Activated CD4-positive, alpha-beta memory T cell treated with anti-CD3 and anti-CD28 coated beads for 36 hours (primary cell): ENCODE measurements at regions of chr22 and their contacts with region 1.

Region 1: GRCh38 chr22:37633625-37634416 is 5.6 kb upstream of the SH3BP1 start:
- DNase-seq: peak; percentile 85
- H3K4me3 Mint-ChIP-seq: peak overlapping the region; percentile 66
- H3K27ac Mint-ChIP-seq: peak overlapping the region; percentile 95
- H3K4me1 Mint-ChIP-seq: peaks cover 65% of the 10 kb centered on the region
- H3K27me3 Mint-ChIP-seq: no peaks in the 10 kb centered on the region

Region 2: DNA sequence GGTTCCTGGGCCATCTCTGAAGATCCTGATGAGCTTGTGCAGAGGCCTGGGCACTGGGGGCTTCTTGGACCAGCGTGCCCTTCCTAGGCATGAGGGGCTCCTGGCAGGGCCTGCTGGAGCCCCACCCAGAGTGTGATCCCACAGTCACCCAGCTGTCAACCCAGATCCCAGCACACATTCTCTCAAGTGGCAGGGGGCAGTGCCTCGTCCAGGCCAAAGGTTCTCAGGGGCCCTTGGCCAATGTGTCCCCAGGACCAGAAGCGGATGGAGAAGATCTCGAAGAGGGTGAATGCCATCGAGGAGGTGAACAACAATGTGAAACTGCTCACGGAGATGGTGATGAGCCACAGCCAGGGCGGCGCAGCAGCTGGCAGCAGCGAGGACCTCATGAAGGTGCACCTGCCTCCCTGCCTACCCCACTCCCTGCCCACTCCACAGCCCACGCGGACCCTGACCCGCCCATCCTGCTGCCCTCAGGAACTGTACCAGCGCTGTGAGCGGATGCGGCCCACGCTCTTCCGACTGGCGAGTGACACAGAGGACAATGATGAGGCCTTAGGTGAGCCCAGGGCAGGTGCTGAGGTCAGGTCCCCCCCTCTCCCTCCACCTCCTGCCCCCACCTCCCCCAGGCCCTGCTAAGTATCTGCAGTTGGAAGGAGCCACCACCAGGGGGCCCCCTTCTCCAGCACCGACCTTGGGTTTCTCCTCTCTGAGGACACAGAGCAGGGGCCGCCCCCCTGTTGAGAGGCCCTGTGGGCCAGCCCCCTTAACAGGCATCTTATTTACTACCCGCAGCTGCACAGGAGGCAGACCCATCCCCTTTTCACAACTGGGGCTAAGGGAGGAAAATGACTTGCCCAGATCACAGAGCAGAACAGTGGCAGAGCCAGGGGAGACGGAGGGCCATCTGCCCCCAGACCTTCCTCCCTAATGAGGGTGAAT is 10.5 kb before region 1 on chr22:
- CTCF ChIA-PET with region 1: interaction called, 12 read pairs
- POLR2A ChIA-PET with region 1: interaction called, 7 read pairs
- intact Hi-C with region 1: loop called (anchors 1 kb)
- DNase-seq: peak; percentile 87
- H3K4me3 Mint-ChIP-seq: no peak overlapping the region
- H3K27ac Mint-ChIP-seq: peak overlapping the region; percentile 87
- H3K4me1 Mint-ChIP-seq: peaks cover 43% of the 10 kb centered on the region
- H3K27me3 Mint-ChIP-seq: no peaks in the 10 kb centered on the region

Region 3: DNA sequence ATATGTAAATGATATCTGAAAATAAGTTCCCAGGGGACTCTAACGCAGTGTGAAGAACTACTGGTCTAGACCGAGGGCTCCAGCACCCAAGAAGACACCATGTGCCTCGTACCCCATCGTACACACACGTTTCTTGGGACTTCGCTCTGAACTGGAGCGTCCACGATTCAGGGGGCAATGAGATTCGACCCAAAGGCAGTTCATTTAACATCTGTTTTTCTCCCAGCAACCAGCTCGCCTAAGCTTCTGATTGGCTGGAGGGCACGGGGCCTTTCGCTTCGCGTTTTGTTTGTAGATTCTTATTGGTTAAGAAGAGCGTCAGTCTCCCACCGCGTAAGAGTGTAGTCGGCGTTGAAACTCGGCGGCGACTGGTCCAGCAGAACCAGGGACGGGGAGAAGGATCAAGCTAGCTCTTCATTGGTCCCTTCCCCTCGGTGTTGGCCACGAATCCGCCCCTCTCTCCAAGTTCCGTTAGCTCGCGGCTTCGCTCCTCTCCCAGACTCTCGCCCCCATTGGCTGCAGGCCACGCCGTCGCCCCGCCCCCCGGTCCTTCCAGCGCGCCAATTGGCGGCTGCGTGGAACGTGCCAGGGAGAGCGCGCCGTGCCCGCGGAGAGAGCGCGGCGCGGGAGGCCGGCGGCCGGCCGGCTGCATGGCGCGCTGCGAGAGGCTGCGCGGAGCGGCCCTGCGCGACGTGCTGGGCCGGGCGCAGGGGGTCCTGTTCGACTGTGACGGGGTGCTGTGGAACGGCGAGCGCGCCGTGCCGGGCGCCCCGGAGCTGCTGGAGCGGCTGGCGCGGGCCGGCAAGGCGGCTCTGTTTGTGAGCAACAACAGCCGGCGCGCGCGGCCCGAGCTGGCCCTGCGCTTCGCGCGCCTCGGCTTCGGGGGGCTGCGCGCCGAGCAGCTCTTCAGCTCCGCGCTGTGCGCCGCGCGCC is 24.6 kb after region 1 on chr22 and contains the start of gene PDXP:
- CTCF ChIA-PET with region 1: interaction called, 6 read pairs
- POLR2A ChIA-PET with region 1: interaction called, 12 read pairs
- intact Hi-C with region 1: no loop called
- DNase-seq: peak; percentile 98
- H3K4me3 Mint-ChIP-seq: peak within 1 kb of the TSS; percentile 87
- H3K27ac Mint-ChIP-seq: peak within 1 kb of the TSS; percentile 72
- H3K4me1 Mint-ChIP-seq: peaks cover 31% of the 10 kb centered on the region
- H3K27me3 Mint-ChIP-seq: no peaks in the 10 kb centered on the region
- total RNA-seq, gene PDXP: 21.9 to 22.9 TPM

Region 4: GRCh38 chr22:37686002-37686982 is 52.5 kb after region 1 on chr22 and contains the start of gene NOL12:
- CTCF ChIA-PET with region 1: interaction called, 574 read pairs
- POLR2A ChIA-PET with region 1: interaction called, 7 read pairs
- intact Hi-C with region 1: no loop called
- DNase-seq: peak; percentile 86
- H3K4me3 Mint-ChIP-seq: peak within 1 kb of the TSS; percentile 98
- H3K27ac Mint-ChIP-seq: peak within 1 kb of the TSS; percentile 94
- H3K4me1 Mint-ChIP-seq: peaks cover 26% of the 10 kb centered on the region
- H3K27me3 Mint-ChIP-seq: no peaks in the 10 kb centered on the region
- total RNA-seq, gene NOL12: 32.5 to 33.3 TPM

Region 5: GRCh38 chr22:37701141-37701786 is 67.4 kb after region 1 on chr22:
- CTCF ChIA-PET with region 1: no interaction called
- POLR2A ChIA-PET with region 1: no interaction called
- intact Hi-C with region 1: no loop called
- DNase-seq: no peak
- H3K4me3 Mint-ChIP-seq: no peak overlapping the region
- H3K27ac Mint-ChIP-seq: no peak overlapping the region
- H3K4me1 Mint-ChIP-seq: peaks cover 3% of the 10 kb centered on the region
- H3K27me3 Mint-ChIP-seq: no peaks in the 10 kb centered on the region

Region 6: DNA sequence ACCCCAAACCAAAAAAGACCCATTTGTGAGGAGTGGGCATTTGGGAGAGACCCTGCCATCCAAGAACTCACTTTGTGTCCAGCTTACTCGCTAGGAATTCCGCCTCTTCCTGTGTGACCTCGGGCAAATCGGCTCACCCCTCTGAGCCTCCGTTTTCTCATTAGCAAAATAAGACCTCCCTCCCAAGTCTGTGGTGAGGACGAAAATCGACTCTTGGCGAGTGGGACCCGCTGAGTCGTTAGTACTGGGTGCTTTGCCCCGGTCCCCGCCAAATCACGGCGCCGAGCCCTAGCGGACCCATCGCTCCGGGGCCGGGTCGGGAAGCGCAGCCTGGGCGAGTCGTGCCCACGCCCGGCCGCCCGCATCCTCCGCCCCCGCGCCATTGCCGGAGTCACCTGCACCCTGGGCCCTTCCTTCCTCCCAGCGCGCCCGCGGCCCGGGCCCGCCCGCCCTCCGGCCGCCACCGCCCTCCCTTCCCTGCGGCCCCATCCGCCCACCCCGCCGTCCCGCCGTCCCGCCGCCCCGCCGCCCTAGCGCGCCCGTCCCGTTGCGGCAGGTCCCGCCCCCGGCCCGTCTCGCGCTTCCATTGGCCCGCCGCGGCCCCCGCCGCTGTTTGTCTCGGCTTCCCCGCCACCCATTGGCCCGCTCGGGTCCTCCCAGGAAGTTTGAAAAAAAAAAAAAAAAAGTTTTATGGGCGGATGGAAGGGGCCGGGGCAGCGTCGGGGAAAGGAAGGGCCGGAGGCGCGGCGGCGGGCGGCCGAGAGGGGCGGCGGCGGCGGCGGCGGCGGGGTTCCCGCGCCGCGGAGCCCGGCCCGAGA is 111.9 kb after region 1 on chr22:
- CTCF ChIA-PET with region 1: no interaction called
- POLR2A ChIA-PET with region 1: no interaction called
- intact Hi-C with region 1: loop called (anchors 10 kb)
- DNase-seq: peak; percentile 93
- H3K4me3 Mint-ChIP-seq: peak overlapping the region; percentile 80
- H3K27ac Mint-ChIP-seq: peak overlapping the region; percentile 75
- H3K4me1 Mint-ChIP-seq: peaks cover 27% of the 10 kb centered on the region
- H3K27me3 Mint-ChIP-seq: no peaks in the 10 kb centered on the region